Motor neuron (in vitro differentiated cells): ENCODE measurements at regions of chr12 and their contacts with region 1.

Region 1: DNA sequence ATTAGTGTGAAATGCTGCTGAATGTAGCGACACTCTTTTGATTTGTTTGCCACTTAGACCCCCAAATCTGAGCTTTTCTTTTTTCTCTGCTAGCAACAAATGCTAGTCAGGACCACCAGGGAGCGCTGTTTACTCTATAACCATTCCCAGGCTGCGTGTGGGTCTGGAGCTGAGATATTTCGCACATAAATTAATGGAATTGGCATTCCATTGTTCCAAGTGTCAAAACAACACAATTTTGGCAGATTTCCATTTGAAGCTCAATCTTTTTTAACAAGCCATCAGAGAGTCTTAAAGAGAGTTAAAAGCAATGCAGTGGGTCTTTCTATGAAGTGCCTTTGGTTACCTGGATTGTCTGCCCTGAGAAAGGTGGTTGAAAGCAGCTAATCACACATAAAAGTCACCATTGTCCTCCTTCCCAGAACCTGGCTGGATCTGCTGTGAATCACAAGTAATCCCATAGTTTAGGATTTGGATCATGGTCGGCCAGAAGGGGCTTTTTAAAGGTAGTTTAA is 7.4 kb upstream of the TMEM132C start:
- ATAC-seq: peak in 4 of 8 experiments; percentile 53 to 77 (median 62)
- H3K4me3 ChIP-seq: no peak overlapping the region
- H3K27ac ChIP-seq: no peak overlapping the region
- H3K4me1 ChIP-seq: no peaks in the 10 kb centered on the region

Region 2: DNA sequence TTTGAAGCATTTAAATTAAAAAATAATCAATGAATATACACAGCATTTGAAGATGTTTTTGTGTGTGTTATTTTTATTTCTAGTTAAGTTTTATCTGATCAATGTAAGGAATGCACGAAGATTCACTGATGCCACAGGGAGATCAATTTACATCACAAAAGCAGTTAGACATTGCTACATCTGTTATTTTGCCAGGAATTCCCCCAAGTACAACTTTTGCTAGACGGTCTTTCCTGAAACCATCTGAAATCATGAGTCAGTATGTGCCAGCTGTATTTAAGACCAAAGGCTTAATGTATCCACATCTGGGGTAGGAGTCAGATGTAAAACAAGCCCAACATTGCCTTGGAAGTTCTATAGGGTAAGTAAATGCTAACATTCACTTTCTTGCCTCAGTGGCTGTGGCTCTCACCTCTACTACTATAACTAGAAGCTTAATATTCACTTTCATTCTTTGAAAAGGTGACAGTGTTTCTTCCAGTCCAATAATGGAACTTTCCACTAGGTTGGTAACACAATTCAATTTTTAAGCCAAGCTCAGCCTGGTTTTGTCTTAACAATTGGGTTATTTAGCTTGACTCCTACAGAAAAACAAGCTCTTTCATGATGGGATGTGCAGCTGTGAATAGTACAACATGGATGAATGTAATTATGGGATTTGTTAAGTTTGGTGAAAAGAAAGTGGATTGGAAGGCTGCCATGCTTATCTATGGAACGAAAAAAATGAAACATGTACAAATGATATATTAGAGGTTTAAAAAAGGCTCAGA is 378.1 kb before region 1 on chr12:
- in situ Hi-C with region 1: no loop called
- ATAC-seq: peak in 1 of 8 experiments; percentile 59
- H3K4me3 ChIP-seq: no peak overlapping the region
- H3K27ac ChIP-seq: no peak overlapping the region
- H3K4me1 ChIP-seq: no peaks in the 10 kb centered on the region

Region 3: GRCh38 chr12:128387811-128388422 is 128.3 kb after region 1 on chr12:
- in situ Hi-C with region 1: loop called in 2 of 9 experiments (anchors 25 kb)
- ATAC-seq: peak in 3 of 8 experiments; percentile 26 to 97 (median 84)
- H3K4me3 ChIP-seq: no peak overlapping the region
- H3K27ac ChIP-seq: no peak overlapping the region
- H3K4me1 ChIP-seq: no peaks in the 10 kb centered on the region

Region 4: GRCh38 chr12:128783129-128783574 is 523.5 kb after region 1 on chr12:
- in situ Hi-C with region 1: loop called in 1 of 9 experiments (anchors 25 kb)
- ATAC-seq: peak in 2 of 8 experiments; percentile 32 to 47
- H3K4me3 ChIP-seq: no peak overlapping the region
- H3K27ac ChIP-seq: no peak overlapping the region
- H3K4me1 ChIP-seq: no peaks in the 10 kb centered on the region

Region 5: GRCh38 chr12:128823916-128824839 is 564.6 kb after region 1 on chr12 and contains the start of gene SLC15A4:
- in situ Hi-C with region 1: loop called in 1 of 9 experiments (anchors 25 kb)
- ATAC-seq: peak; percentile 93 to 98 (median 96)
- H3K4me3 ChIP-seq: peak within 1 kb of the TSS; percentile 50 to 63 (median 56)
- H3K27ac ChIP-seq: peak within 1 kb of the TSS; percentile 90 to 91
- H3K4me1 ChIP-seq: peaks cover 0 to 13% of the 10 kb centered on the region in 2 donors
- total RNA-seq, gene SLC15A4: 1.8 to 13.9 (median 6.6) TPM